Naive thymus-derived CD4-positive, alpha-beta T cell (primary cell): ENCODE measurements at regions of chr15 and their contacts with region 1.

Region 1: DNA sequence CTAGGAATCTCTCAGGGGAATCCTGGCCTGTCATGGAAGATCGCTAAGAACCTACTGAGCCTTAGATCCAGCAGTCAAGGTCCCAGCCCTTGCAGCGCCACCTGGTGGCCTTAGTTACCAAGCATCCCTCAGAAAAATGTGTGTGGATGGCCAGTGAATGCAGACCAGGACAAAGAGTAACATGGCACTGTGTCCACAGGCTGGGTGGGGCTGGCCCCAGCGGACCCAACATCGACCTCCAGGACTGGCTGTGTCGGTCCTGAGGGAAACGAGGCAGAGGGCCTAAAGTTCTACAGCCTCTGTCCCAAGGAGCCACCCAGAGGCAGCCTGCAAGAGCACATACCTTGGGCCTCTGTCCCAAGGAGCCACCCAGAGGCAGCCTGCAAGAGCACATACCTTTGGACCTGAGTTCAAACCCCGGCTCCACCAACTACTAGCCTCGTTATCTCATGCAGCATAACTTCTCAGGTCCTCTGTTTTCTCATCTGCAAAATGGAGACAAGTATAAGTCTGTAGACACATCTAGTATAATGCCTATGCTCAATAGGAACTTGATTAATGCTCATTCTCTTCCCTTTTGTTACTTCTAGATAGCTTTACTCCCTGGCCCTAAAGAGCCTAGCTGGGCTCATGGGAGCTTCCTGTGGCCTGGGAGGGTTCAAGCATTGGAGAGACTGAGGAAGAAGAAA is 57.5 kb upstream of the HERC1 start:
- DNase-seq: peak; percentile 33 to 77 (median 59)
- ATAC-seq: peak; percentile 60
- H3K4me3 ChIP-seq: no peak overlapping the region
- H3K4me3 Mint-ChIP-seq: peak overlapping the region in 9 of 10 donors; percentile 17 to 82 (median 51)
- H3K27ac ChIP-seq: peak overlapping the region; percentile 54
- H3K27ac Mint-ChIP-seq: peak overlapping the region; percentile 75 to 98 (median 88)
- H3K4me1 ChIP-seq: peaks cover 53% of the 10 kb centered on the region in 2 donors
- H3K4me1 Mint-ChIP-seq: peaks cover 57 to 81% (median 73%) of the 10 kb centered on the region in 7 donors
- H3K27me3 ChIP-seq: no peaks in the 10 kb centered on the region
- H3K27me3 Mint-ChIP-seq: no peaks in the 10 kb centered on the region

Region 2: DNA sequence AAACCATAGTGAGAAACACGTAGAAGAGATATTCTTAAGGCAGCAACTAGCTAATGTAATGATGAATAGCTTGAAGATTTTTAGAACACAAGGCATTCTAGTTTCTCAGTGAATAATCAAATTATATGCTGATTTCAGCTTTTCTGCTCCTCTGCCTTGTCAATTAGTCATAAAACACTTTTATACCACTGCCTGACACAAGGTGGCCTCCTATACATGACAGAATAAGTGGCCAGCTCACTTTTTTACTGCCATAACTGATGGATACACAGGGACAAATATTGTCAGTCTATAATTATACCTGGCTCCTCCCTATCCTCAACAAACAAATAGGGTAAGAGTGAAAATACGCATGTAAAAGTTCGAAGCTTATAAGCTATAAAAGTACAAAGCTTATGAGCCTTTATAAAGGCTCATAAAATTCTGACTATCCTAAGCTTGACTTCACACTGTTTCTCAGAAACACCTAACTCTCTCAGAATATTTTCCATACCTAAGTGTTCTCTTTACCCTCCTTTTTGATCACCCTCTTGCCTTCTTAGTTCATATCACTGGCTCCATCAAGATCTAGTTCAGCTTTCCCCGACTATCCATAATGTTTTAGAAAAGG is 139.0 kb before region 1 on chr15:
- CTCF ChIA-PET with region 1: interaction called, 32 read pairs
- POLR2A ChIA-PET with region 1: no interaction called
- intact Hi-C with region 1: loop called (anchors 1 kb)
- DNase-seq: peak in 7 of 9 donors; percentile 39 to 70 (median 59)
- ATAC-seq: peak; percentile 93
- H3K4me3 ChIP-seq: no peak overlapping the region
- H3K4me3 Mint-ChIP-seq: no peak overlapping the region
- H3K27ac ChIP-seq: no peak overlapping the region
- H3K27ac Mint-ChIP-seq: peak overlapping the region in 7 of 9 donors; percentile 5 to 83 (median 63)
- H3K4me1 ChIP-seq: no peaks in the 10 kb centered on the region
- H3K4me1 Mint-ChIP-seq: peaks cover 0 to 9% (median 2%) of the 10 kb centered on the region in 7 donors
- H3K27me3 ChIP-seq: no peaks in the 10 kb centered on the region
- H3K27me3 Mint-ChIP-seq: no peaks in the 10 kb centered on the region

Region 3: GRCh38 chr15:63833021-63833696 is 58.1 kb before region 1 on chr15:
- CTCF ChIA-PET with region 1: interaction called, 13 read pairs
- POLR2A ChIA-PET with region 1: interaction called, 7 read pairs
- intact Hi-C with region 1: loop called (anchors 1 to 2 kb)
- DNase-seq: peak; percentile 11 to 55 (median 38)
- ATAC-seq: peak; percentile 48
- H3K4me3 ChIP-seq: peak overlapping the region; percentile 68
- H3K4me3 Mint-ChIP-seq: peak overlapping the region; percentile 86 to 98 (median 94)
- H3K27ac ChIP-seq: peak overlapping the region; percentile 99
- H3K27ac Mint-ChIP-seq: peak overlapping the region; percentile 94 to 99 (median 97)
- H3K4me1 ChIP-seq: peaks cover 30 to 31% of the 10 kb centered on the region in 2 donors
- H3K4me1 Mint-ChIP-seq: peaks cover 46 to 66% (median 56%) of the 10 kb centered on the region in 7 donors
- H3K27me3 ChIP-seq: no peaks in the 10 kb centered on the region
- H3K27me3 Mint-ChIP-seq: peaks cover 0 to 9% (median 0%) of the 10 kb centered on the region in 5 donors

Region 4: GRCh38 chr15:63860155-63860554 is 31.1 kb before region 1 on chr15:
- CTCF ChIA-PET with region 1: interaction called, 15 read pairs
- POLR2A ChIA-PET with region 1: interaction called, 14 read pairs
- intact Hi-C with region 1: loop called (anchors 1 kb)
- DNase-seq: peak; percentile 27 to 90 (median 83)
- ATAC-seq: peak; percentile 95
- H3K4me3 ChIP-seq: no peak overlapping the region
- H3K4me3 Mint-ChIP-seq: peak overlapping the region; percentile 54 to 85 (median 76)
- H3K27ac ChIP-seq: peak overlapping the region; percentile 76
- H3K27ac Mint-ChIP-seq: peak overlapping the region; percentile 87 to 99 (median 97)
- H3K4me1 ChIP-seq: peaks cover 7 to 42% of the 10 kb centered on the region in 2 donors
- H3K4me1 Mint-ChIP-seq: peaks cover 29 to 78% (median 73%) of the 10 kb centered on the region in 7 donors
- H3K27me3 ChIP-seq: no peaks in the 10 kb centered on the region
- H3K27me3 Mint-ChIP-seq: no peaks in the 10 kb centered on the region

Region 5: GRCh38 chr15:63945007-63945788 is 54.0 kb after region 1 on chr15:
- CTCF ChIA-PET with region 1: interaction called, 12 read pairs
- POLR2A ChIA-PET with region 1: no interaction called
- intact Hi-C with region 1: loop called in 1 of 2 experiments (anchors 1 kb)
- DNase-seq: peak; percentile 21 to 68 (median 48)
- ATAC-seq: peak; percentile 94
- H3K4me3 ChIP-seq: no peak overlapping the region
- H3K4me3 Mint-ChIP-seq: no peak overlapping the region
- H3K27ac ChIP-seq: no peak overlapping the region
- H3K27ac Mint-ChIP-seq: peak overlapping the region in 5 of 9 donors; percentile 5 to 75 (median 15)
- H3K4me1 ChIP-seq: peaks cover 0 to 6% of the 10 kb centered on the region in 2 donors
- H3K4me1 Mint-ChIP-seq: peaks cover 1 to 33% (median 6%) of the 10 kb centered on the region in 7 donors
- H3K27me3 ChIP-seq: no peaks in the 10 kb centered on the region
- H3K27me3 Mint-ChIP-seq: no peaks in the 10 kb centered on the region

Region 6: DNA sequence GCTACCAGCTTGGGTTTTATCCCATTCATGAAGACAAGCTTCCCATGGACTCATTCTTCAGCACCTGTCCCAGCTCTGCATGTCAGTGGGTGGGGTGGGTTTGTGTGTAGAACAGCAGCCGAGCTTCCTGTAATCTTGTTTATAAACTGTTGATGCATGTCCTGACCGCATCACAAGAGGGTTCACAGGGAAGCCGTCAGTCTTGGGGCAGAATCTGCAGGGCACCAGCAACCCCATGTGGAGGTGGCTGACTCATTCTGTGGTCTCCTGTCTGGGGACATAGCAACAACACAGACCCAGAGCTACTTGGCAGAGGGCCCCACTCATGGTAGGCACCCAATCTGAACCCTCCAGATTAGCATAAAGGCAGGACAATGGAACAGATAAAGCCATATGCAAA is 119.5 kb after region 1 on chr15:
- CTCF ChIA-PET with region 1: interaction called, 5 read pairs
- POLR2A ChIA-PET with region 1: no interaction called
- intact Hi-C with region 1: loop called (anchors 1 kb)
- DNase-seq: peak; percentile 43 to 92 (median 85)
- ATAC-seq: peak; percentile 98
- H3K4me3 ChIP-seq: no peak overlapping the region
- H3K4me3 Mint-ChIP-seq: peak overlapping the region; percentile 32 to 87 (median 62)
- H3K27ac ChIP-seq: peak overlapping the region; percentile 32
- H3K27ac Mint-ChIP-seq: peak overlapping the region; percentile 87 to 98 (median 95)
- H3K4me1 ChIP-seq: peaks cover 24 to 27% of the 10 kb centered on the region in 2 donors
- H3K4me1 Mint-ChIP-seq: peaks cover 20 to 64% (median 30%) of the 10 kb centered on the region in 7 donors
- H3K27me3 ChIP-seq: no peaks in the 10 kb centered on the region
- H3K27me3 Mint-ChIP-seq: peaks cover 0 to 3% (median 0%) of the 10 kb centered on the region in 5 donors

Region 7: GRCh38 chr15:64067564-64068030 is 176.4 kb after region 1 on chr15:
- CTCF ChIA-PET with region 1: interaction called, 4 read pairs
- POLR2A ChIA-PET with region 1: no interaction called
- intact Hi-C with region 1: loop called (anchors 1 kb)
- DNase-seq: peak; percentile 44 to 74 (median 63)
- ATAC-seq: peak; percentile 89
- H3K4me3 ChIP-seq: no peak overlapping the region
- H3K4me3 Mint-ChIP-seq: peak overlapping the region in 1 of 10 donors; percentile 33
- H3K27ac ChIP-seq: no peak overlapping the region
- H3K27ac Mint-ChIP-seq: peak overlapping the region in 2 of 9 donors; percentile 19 to 36
- H3K4me1 ChIP-seq: peaks cover 0 to 3% of the 10 kb centered on the region in 2 donors
- H3K4me1 Mint-ChIP-seq: peaks cover 0 to 15% (median 4%) of the 10 kb centered on the region in 7 donors
- H3K27me3 ChIP-seq: no peaks in the 10 kb centered on the region
- H3K27me3 Mint-ChIP-seq: no peaks in the 10 kb centered on the region

Region 8: DNA sequence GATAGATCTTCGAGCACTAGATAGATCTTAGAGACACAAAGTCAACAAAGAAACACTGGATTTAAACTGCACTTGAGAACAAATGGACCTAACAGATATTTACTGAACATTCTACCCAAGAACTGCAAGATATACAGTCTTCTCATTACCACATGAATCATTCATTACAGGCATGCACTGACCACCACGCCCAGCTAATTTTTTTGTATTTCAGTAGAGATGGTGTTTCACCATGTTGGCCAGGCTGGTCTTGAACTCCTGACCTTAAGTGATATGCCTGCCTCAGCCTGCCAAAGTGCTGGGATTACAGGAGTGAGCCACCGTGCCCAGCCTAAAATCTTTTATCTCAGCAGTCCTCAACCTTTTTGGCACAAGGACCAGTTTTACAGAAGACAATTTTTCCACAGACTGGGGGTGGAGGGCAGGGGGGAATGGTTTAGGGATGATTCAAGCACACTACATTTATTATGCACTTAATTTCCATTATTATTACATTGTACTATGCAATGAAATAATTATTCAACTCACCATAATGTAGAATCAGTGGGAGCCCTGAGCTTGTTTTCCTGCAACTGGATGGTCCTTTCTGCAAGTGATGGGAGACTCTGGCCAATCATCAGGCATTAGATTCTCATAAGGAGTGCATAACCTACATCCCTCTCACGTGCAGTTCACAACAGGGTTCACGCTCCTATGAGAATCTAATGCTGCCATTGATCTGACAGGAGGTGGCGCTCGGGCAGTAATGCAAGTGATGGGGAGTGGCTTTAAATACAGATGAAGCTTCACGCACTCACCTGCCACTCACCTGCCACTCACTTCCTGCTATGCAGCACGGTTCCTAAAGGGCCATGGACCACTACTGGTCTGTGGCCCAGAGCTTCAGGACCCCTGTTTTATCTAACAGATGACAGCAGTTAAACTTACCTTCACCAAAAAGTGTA is 443.0 kb after region 1 on chr15:
- CTCF ChIA-PET with region 1: no interaction called
- POLR2A ChIA-PET with region 1: no interaction called
- intact Hi-C with region 1: no loop called
- DNase-seq: peak in 7 of 9 donors; percentile 27 to 51 (median 37)
- ATAC-seq: peak; percentile 65
- H3K4me3 ChIP-seq: no peak overlapping the region
- H3K4me3 Mint-ChIP-seq: peak overlapping the region in 7 of 10 donors; percentile 13 to 46 (median 29)
- H3K27ac ChIP-seq: peak overlapping the region; percentile 42
- H3K27ac Mint-ChIP-seq: peak overlapping the region; percentile 60 to 91 (median 77)
- H3K4me1 ChIP-seq: peaks cover 4 to 14% of the 10 kb centered on the region in 2 donors
- H3K4me1 Mint-ChIP-seq: peaks cover 6 to 36% (median 29%) of the 10 kb centered on the region in 7 donors
- H3K27me3 ChIP-seq: no peaks in the 10 kb centered on the region
- H3K27me3 Mint-ChIP-seq: no peaks in the 10 kb centered on the region